PC-9 (cell line): ENCODE measurements at regions of chr3 and their contacts with region 1.

Region 1: GRCh38 chr3:31531992-31532586 is 636 bp upstream of the STT3B start:
- DNase-seq: peak; percentile 85 to 98
- H3K4me3 ChIP-seq: peak overlapping the region; percentile 92
- H3K27ac ChIP-seq: peak overlapping the region; percentile 94
- H3K4me1 ChIP-seq: peaks cover 17% of the 10 kb centered on the region
- H3K27me3 ChIP-seq: no peaks in the 10 kb centered on the region
- CTCF ChIP-seq: no peak

Region 2: DNA sequence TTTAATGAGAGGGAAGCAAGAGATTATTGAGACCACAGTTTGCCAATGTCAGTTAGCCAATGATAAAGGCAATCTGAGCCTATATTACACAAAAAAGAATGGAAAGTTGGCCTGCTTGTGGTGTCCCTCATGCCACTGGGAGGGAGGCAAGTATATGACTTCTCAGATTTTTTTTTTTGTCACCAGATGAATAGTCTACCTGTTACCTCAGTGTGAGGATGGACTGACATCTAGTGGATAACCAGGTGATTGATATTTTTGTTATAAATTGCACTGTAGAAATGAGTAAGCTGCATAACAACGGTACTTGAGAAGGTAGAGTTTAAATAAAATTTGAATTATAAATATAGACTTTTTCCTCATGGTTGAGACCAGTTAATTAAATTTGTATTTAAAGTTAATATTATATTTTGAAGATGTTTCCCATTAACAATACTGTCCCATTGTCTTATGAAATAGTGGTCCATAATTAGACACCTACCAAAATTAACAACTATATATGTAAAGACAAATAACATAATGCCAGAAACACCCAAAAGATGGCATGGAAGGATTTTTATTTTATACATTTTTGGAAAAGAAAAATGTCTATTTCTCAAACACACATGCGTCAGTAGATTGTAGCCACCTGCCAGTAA is 399.8 kb before region 1 on chr3:
- CTCF ChIA-PET with region 1: no interaction called
- POLR2A ChIA-PET with region 1: no interaction called
- intact Hi-C with region 1: loop called (anchors 10 kb)
- DNase-seq: peak in 1 of 2 experiments; percentile 36
- H3K4me3 ChIP-seq: no peak overlapping the region
- H3K27ac ChIP-seq: no peak overlapping the region
- H3K4me1 ChIP-seq: no peaks in the 10 kb centered on the region
- H3K27me3 ChIP-seq: no peaks in the 10 kb centered on the region
- CTCF ChIP-seq: peak; percentile 66

Region 3: GRCh38 chr3:31288641-31289100 is 243.4 kb before region 1 on chr3:
- CTCF ChIA-PET with region 1: no interaction called
- POLR2A ChIA-PET with region 1: no interaction called
- intact Hi-C with region 1: loop called (anchors 2 kb)
- DNase-seq: peak; percentile 90 to 91
- H3K4me3 ChIP-seq: no peak overlapping the region
- H3K27ac ChIP-seq: peak overlapping the region; percentile 66
- H3K4me1 ChIP-seq: peaks cover 46% of the 10 kb centered on the region
- H3K27me3 ChIP-seq: no peaks in the 10 kb centered on the region
- CTCF ChIP-seq: no peak

Region 4: GRCh38 chr3:31377045-31377642 is 154.9 kb before region 1 on chr3:
- CTCF ChIA-PET with region 1: no interaction called
- POLR2A ChIA-PET with region 1: interaction called, 11 read pairs
- intact Hi-C with region 1: loop called (anchors 5 kb)
- DNase-seq: peak; percentile 46 to 88
- H3K4me3 ChIP-seq: no peak overlapping the region
- H3K27ac ChIP-seq: peak overlapping the region; percentile 71
- H3K4me1 ChIP-seq: peaks cover 17% of the 10 kb centered on the region
- H3K27me3 ChIP-seq: no peaks in the 10 kb centered on the region
- CTCF ChIP-seq: no peak

Region 5: DNA sequence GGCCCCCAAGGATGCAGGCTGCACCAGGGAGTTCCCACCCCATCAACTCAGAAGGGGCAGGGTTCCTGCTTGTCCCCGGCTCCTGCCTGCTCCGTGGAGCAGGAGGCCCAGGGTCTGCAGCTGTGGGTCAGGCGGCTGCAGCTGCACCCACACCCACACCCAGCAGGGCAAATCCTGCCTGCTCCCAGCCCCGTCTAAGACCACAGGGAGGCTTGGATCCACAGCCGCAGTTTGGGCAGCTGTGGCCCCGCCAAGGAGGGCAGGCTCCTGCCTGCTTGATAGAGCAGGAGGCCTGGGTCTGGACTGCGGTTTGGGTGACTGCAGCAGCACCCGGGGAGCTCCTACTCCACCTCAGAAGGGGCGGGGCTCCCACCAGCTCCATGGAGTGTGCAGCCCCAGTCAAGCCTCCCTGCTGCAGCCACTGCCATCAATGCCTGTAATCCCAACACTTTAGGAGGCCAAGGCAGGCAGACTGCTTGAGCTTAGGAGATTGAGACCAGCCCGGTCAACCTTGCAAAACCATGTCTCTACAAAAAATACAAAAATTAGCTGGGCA is 285.4 kb after region 1 on chr3:
- CTCF ChIA-PET with region 1: no interaction called
- POLR2A ChIA-PET with region 1: no interaction called
- intact Hi-C with region 1: no loop called
- DNase-seq: no peak
- H3K4me3 ChIP-seq: no peak overlapping the region
- H3K27ac ChIP-seq: no peak overlapping the region
- H3K4me1 ChIP-seq: no peaks in the 10 kb centered on the region
- H3K27me3 ChIP-seq: no peaks in the 10 kb centered on the region
- CTCF ChIP-seq: no peak

Region 6: GRCh38 chr3:31828007-31828406 is 295.9 kb after region 1 on chr3:
- CTCF ChIA-PET with region 1: no interaction called
- POLR2A ChIA-PET with region 1: interaction called, 11 read pairs
- intact Hi-C with region 1: no loop called
- DNase-seq: no peak
- H3K4me3 ChIP-seq: no peak overlapping the region
- H3K27ac ChIP-seq: no peak overlapping the region
- H3K4me1 ChIP-seq: no peaks in the 10 kb centered on the region
- H3K27me3 ChIP-seq: no peaks in the 10 kb centered on the region
- CTCF ChIP-seq: no peak

Region 7: GRCh38 chr3:32249184-32249782 is 717.2 kb after region 1 on chr3:
- CTCF ChIA-PET with region 1: no interaction called
- POLR2A ChIA-PET with region 1: interaction called, 25 read pairs
- intact Hi-C with region 1: no loop called
- DNase-seq: peak; percentile 17 to 88
- H3K4me3 ChIP-seq: no peak overlapping the region
- H3K27ac ChIP-seq: peak overlapping the region; percentile 84
- H3K4me1 ChIP-seq: peaks cover 30% of the 10 kb centered on the region
- H3K27me3 ChIP-seq: no peaks in the 10 kb centered on the region
- CTCF ChIP-seq: no peak